ENCODE measurements at regions of chr10 and their contacts with region 1.

Region 1: DNA sequence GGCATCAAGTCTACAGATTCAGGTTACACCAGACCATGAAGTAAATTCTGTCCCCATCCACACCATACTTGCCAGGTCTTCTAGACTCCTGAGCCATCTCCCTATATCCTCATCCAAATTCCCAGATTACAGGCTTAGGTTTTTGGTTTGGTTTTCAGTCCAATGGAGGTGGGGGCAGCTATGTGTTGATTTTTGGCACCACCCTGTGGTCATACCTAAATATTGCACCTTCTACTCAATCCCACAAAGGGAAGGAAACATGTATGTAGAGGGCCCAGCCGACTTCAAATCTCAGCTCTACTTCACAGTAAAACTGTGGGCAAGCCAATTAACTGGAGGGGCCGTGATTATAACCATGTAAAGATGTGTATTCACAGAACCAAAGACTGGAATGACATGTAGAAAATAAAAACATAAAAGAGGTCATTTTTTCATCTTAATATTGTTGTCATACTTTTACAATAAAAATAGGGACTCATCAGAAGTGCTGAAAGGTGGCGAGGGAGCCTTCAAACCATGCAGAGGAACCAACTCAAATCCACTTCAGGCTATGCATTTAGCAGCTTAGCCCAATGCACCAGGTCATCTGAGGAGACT is 19.8 kb downstream of the ERCC6 start:
- DNase-seq: no peak
- ATAC-seq: peak; percentile 93
- H3K4me3 ChIP-seq: no peak overlapping the region
- H3K27ac ChIP-seq: no peak overlapping the region
- H3K4me1 ChIP-seq: no peaks in the 10 kb centered on the region
- H3K27me3 ChIP-seq: no peaks in the 10 kb centered on the region
- CTCF ChIP-seq: peak; percentile 58 to 75 (median 66)
- EP300 ChIP-seq: no peak
- POLR2A ChIP-seq: no peak
- RAD21 ChIP-seq: peak; percentile 72

Region 2: DNA sequence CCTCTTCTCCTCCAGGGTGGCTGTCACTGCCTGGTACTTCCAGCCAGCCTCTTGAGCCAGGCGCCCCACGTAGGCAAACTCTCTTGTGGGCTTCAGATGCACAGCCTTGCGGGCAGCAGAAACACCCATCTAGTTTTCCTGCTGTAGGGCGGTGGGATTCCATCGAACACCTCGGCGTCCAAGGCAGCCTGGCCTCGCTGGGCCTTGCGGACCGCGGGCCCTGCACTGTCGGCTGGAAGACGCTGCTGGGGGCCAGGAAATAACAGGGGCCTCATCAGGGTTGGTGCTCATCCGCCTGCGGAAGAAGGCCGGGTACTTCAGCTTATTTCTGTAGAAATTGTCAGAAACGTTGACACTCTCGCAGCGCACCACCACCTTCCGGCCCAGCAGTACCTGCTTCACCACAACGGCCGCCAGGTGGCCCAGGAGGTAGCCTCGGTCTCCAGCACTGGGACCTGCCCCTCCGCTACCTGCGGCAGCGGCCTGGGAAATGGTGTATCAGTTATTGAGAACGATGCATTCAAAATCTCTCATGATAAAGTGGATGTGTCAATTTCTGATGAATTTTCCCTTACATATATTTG is 773.3 kb before region 1 on chr10:
- CTCF ChIA-PET with region 1: no interaction called
- POLR2A ChIA-PET with region 1: no interaction called
- RAD21 ChIA-PET with region 1: no interaction called
- SMC1A ChIA-PET with region 1: no interaction called
- in situ Hi-C with region 1: loop called (anchors 25 kb)
- intact Hi-C with region 1: no loop called
- DNase-seq: no peak
- ATAC-seq: no peak
- H3K4me3 ChIP-seq: no peak overlapping the region
- H3K27ac ChIP-seq: no peak overlapping the region
- H3K4me1 ChIP-seq: peaks cover 22% of the 10 kb centered on the region
- H3K27me3 ChIP-seq: no peaks in the 10 kb centered on the region
- CTCF ChIP-seq: no peak
- EP300 ChIP-seq: no peak
- POLR2A ChIP-seq: no peak
- RAD21 ChIP-seq: no peak

Region 3: GRCh38 chr10:48981310-48981907 is 537.7 kb before region 1 on chr10:
- CTCF ChIA-PET with region 1: interaction called, 3 read pairs
- POLR2A ChIA-PET with region 1: no interaction called
- RAD21 ChIA-PET with region 1: no interaction called
- SMC1A ChIA-PET with region 1: interaction called, 4 read pairs
- in situ Hi-C with region 1: loop called (anchors 5 kb)
- intact Hi-C with region 1: loop called (anchors 2 kb)
- DNase-seq: no peak
- ATAC-seq: peak; percentile 88
- H3K4me3 ChIP-seq: no peak overlapping the region
- H3K27ac ChIP-seq: no peak overlapping the region
- H3K4me1 ChIP-seq: no peaks in the 10 kb centered on the region
- H3K27me3 ChIP-seq: no peaks in the 10 kb centered on the region
- CTCF ChIP-seq: peak; percentile 70 to 81 (median 80)
- EP300 ChIP-seq: no peak
- POLR2A ChIP-seq: no peak
- RAD21 ChIP-seq: peak; percentile 67

Region 4: DNA sequence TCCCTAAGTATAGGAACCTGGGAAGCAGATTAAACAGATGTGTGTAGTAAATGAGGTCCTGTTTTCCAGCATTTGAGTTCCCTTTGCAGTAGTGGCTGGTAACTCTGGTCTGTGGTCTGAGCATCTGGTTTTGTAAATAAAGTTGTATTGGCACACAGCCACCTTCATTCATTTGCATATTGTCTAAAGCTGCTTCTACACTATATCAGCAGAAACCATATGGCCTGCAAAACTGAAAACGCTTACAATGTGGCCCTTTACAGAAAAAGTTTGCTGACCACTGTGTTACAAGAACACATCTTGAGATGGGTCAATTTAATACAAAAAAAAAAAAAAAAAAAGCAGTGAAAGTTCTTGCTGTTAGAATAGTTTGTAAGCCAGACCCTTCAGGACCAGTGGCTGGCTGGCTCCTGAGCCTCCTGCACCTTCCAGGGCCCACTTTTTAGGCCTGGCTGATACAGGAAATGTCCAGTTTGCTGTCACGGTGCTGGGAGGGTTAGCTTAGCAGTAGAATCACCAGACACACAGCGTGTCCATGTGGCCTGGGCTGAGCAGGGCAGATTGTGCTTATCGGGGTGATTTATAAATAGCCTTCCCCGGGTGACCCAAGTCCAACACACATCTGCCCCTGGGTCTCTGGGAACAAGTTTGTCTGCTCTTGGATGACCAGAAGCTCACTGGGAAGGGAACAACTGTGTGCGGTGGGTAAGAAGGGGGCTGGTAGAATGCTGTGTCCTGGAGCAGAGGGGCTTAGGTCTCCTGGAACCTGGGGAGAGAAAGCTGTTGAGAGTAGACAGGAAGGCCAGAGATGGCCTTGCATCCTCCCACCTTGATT is 218.7 kb before region 1 on chr10:
- CTCF ChIA-PET with region 1: no interaction called
- POLR2A ChIA-PET with region 1: no interaction called
- RAD21 ChIA-PET with region 1: no interaction called
- SMC1A ChIA-PET with region 1: no interaction called
- in situ Hi-C with region 1: no loop called
- intact Hi-C with region 1: loop called (anchors 10 kb)
- DNase-seq: peak; percentile 59
- ATAC-seq: peak; percentile 81
- H3K4me3 ChIP-seq: no peak overlapping the region
- H3K27ac ChIP-seq: no peak overlapping the region
- H3K4me1 ChIP-seq: peaks cover 13% of the 10 kb centered on the region
- H3K27me3 ChIP-seq: no peaks in the 10 kb centered on the region; a peak in 2 of 4 replicates
- CTCF ChIP-seq: no peak
- EP300 ChIP-seq: no peak
- POLR2A ChIP-seq: no peak
- RAD21 ChIP-seq: no peak

Region 5: GRCh38 chr10:49419005-49419404 is 100.1 kb before region 1 on chr10:
- CTCF ChIA-PET with region 1: no interaction called
- POLR2A ChIA-PET with region 1: no interaction called
- RAD21 ChIA-PET with region 1: no interaction called
- SMC1A ChIA-PET with region 1: no interaction called
- in situ Hi-C with region 1: loop called (anchors 5 kb)
- intact Hi-C with region 1: no loop called
- DNase-seq: no peak
- ATAC-seq: no peak
- H3K4me3 ChIP-seq: no peak overlapping the region
- H3K27ac ChIP-seq: no peak overlapping the region
- H3K4me1 ChIP-seq: no peaks in the 10 kb centered on the region
- H3K27me3 ChIP-seq: no peaks in the 10 kb centered on the region; a peak in 1 of 4 replicates
- CTCF ChIP-seq: no peak
- EP300 ChIP-seq: no peak
- POLR2A ChIP-seq: no peak
- RAD21 ChIP-seq: no peak

Region 6: DNA sequence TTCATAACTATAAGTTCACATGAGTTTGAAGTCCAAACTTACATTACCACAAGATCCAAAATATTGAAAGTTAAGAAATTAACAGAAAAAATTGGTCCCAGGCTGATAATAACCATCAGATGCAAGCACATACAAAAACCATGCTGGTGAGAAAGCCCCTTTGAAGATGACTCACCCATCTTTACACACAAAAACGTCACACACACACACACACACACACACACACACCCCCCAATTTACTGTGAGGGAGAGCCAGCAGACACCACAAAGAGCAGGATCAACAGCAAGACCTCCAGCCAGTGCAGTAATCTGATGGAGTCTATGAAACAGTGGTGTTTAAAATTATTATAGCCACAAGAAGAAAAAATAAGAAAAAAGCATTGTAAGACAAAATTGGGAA is 73.0 kb before region 1 on chr10:
- CTCF ChIA-PET with region 1: no interaction called
- POLR2A ChIA-PET with region 1: no interaction called
- RAD21 ChIA-PET with region 1: no interaction called
- SMC1A ChIA-PET with region 1: no interaction called
- in situ Hi-C with region 1: no loop called
- intact Hi-C with region 1: no loop called
- DNase-seq: no peak
- ATAC-seq: peak; percentile 71
- H3K4me3 ChIP-seq: no peak overlapping the region
- H3K27ac ChIP-seq: no peak overlapping the region
- H3K4me1 ChIP-seq: no peaks in the 10 kb centered on the region
- H3K27me3 ChIP-seq: no peaks in the 10 kb centered on the region
- CTCF ChIP-seq: no peak
- EP300 ChIP-seq: no peak
- POLR2A ChIP-seq: no peak
- RAD21 ChIP-seq: no peak

Region 7: GRCh38 chr10:49538381-49539319 is 19.6 kb after region 1 on chr10 and contains the start of gene ERCC6:
- CTCF ChIA-PET with region 1: interaction called, 10 read pairs
- POLR2A ChIA-PET with region 1: no interaction called
- RAD21 ChIA-PET with region 1: interaction called, 8 read pairs
- SMC1A ChIA-PET with region 1: interaction called, 13 read pairs
- in situ Hi-C with region 1: no loop called
- intact Hi-C with region 1: no loop called
- DNase-seq: peak; percentile 91
- ATAC-seq: peak; percentile 90
- H3K4me3 ChIP-seq: peak within 1 kb of the TSS; percentile 64
- H3K27ac ChIP-seq: peak within 1 kb of the TSS; percentile 82
- H3K4me1 ChIP-seq: peaks cover 32% of the 10 kb centered on the region
- H3K27me3 ChIP-seq: no peaks in the 10 kb centered on the region
- CTCF ChIP-seq: 0 out of 6 replicates have a peak, but pooled peaks of 1 of the 3 experiments have one; percentile 1
- EP300 ChIP-seq: peak; percentile 51 to 68; a peak in 2 of 4 replicates
- POLR2A ChIP-seq: peak; percentile 91
- RAD21 ChIP-seq: no peak
- polyA plus RNA-seq, gene ERCC6: 4.3 to 6.6 TPM